ENCODE measurements at regions of chrX and their contacts with region 1.

Region 1: GRCh38 chrX:119685225-119686066 is 7.5 kb downstream of the SEPTIN6 start:
- DNase-seq: peak; percentile 84
- ATAC-seq: peak; percentile 62
- H3K4me3 ChIP-seq: peak overlapping the region; percentile 29 to 47 (median 45)
- H3K4me3 Mint-ChIP-seq: peak overlapping the region; percentile 94
- H3K27ac ChIP-seq: peak overlapping the region; percentile 99
- H3K27ac Mint-ChIP-seq: peak overlapping the region; percentile 99
- H3K4me1 ChIP-seq: peaks cover 94 to 97% of the 10 kb centered on the region in 2 donors
- H3K4me1 Mint-ChIP-seq: peaks cover 74% of the 10 kb centered on the region
- H3K27me3 ChIP-seq: no peaks in the 10 kb centered on the region
- H3K27me3 Mint-ChIP-seq: no peaks in the 10 kb centered on the region
- CTCF ChIP-seq: no peak

Region 2: GRCh38 chrX:119617517-119618164 is 67.8 kb before region 1 on chrX:
- CTCF ChIA-PET with region 1: interaction called, 8 read pairs
- POLR2A ChIA-PET with region 1: no interaction called
- intact Hi-C with region 1: loop called (anchors 5 kb)
- DNase-seq: peak; percentile 71
- ATAC-seq: peak; percentile 48
- H3K4me3 ChIP-seq: peak overlapping the region; percentile 20 to 63 (median 35)
- H3K4me3 Mint-ChIP-seq: peak overlapping the region; percentile 83
- H3K27ac ChIP-seq: peak overlapping the region; percentile 68 to 69
- H3K27ac Mint-ChIP-seq: peak overlapping the region; percentile 90
- H3K4me1 ChIP-seq: peaks cover 58 to 69% of the 10 kb centered on the region in 2 donors
- H3K4me1 Mint-ChIP-seq: peaks cover 59% of the 10 kb centered on the region
- H3K27me3 ChIP-seq: no peaks in the 10 kb centered on the region
- H3K27me3 Mint-ChIP-seq: no peaks in the 10 kb centered on the region
- CTCF ChIP-seq: no peak

Region 3: DNA sequence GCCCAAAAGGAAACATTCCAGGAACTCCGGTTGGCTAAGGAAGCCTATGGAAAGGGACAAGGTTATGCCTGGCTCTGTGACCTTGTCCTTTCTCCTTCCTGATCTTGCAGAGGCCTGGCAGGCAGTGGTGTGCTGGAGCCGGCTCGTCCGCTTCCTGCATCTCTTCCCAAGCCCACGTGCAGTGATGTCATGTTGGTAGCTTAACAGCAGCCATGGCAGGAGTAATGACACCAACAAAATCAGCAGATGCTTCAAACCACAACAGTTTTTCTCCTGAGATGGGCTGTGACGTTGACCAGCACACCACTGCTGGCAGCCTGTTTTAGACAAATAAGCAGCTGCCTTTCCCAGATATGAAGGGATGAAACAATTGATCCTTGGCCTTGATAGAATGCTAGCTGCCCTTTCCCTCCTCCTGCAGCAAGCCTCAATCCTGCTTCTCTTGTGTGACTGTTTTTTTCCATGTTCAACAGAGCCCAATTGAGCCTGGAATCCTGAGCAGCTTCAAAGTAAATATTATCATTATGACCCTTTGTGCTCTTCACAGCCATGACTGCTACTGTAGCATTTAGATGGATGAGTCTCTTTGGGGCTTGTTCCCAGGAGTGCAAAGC is 15.9 kb before region 1 on chrX:
- CTCF ChIA-PET with region 1: interaction called, 10 read pairs
- POLR2A ChIA-PET with region 1: no interaction called
- intact Hi-C with region 1: loop called (anchors 2 kb)
- DNase-seq: no peak
- ATAC-seq: no peak
- H3K4me3 ChIP-seq: no peak overlapping the region
- H3K4me3 Mint-ChIP-seq: no peak overlapping the region
- H3K27ac ChIP-seq: peak overlapping the region in 1 of 2 donors; percentile 10
- H3K27ac Mint-ChIP-seq: peak overlapping the region; percentile 41
- H3K4me1 ChIP-seq: peaks cover 25 to 31% of the 10 kb centered on the region in 2 donors
- H3K4me1 Mint-ChIP-seq: peaks cover 28% of the 10 kb centered on the region
- H3K27me3 ChIP-seq: no peaks in the 10 kb centered on the region
- H3K27me3 Mint-ChIP-seq: no peaks in the 10 kb centered on the region
- CTCF ChIP-seq: no peak

Region 4: DNA sequence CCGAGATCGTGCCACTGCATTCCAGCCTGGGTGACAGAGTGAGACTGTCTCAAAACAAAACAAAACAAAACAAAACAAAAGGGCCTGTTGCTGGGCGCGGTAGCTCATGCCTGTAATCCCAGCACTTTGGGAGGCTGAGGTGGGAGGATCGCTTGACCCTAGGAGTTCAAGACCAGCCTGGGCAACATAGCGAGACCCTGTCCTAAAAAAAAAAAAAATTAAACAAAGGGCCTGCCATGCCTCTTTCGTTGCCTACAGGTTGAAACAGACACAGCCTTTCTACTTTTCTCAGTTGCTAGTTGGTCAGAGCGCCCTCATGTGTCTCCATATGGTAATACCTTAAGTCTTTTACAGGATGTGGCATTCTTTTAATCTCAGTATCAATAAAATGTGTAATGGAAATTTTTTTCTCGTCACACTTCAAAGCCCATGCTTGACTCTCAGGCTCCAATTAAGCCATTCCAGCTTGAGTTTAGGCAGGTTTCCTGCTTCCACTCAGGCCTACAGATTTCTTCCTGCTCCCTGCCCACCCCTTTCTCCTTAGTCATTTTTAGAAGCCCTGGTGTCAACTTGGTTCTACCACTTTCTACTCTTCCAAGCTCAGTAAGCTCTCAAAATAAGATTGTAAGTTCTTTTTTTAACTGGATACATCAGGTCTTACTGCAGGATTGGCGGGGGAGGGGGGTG is 68.3 kb after region 1 on chrX:
- CTCF ChIA-PET with region 1: no interaction called
- POLR2A ChIA-PET with region 1: interaction called, 6 read pairs
- intact Hi-C with region 1: loop called (anchors 5 kb)
- DNase-seq: peak; percentile 69
- ATAC-seq: peak; percentile 11
- H3K4me3 ChIP-seq: no peak overlapping the region
- H3K4me3 Mint-ChIP-seq: peak overlapping the region; percentile 59
- H3K27ac ChIP-seq: peak overlapping the region; percentile 37 to 89
- H3K27ac Mint-ChIP-seq: peak overlapping the region; percentile 96
- H3K4me1 ChIP-seq: peaks cover 43 to 47% of the 10 kb centered on the region in 2 donors
- H3K4me1 Mint-ChIP-seq: peaks cover 41% of the 10 kb centered on the region
- H3K27me3 ChIP-seq: no peaks in the 10 kb centered on the region
- H3K27me3 Mint-ChIP-seq: no peaks in the 10 kb centered on the region
- CTCF ChIP-seq: peak; percentile 63

Measured in B cell (primary cell).